ENCODE measurements at regions of chr14 and their contacts with region 1.

Region 1: GRCh38 chr14:94439453-94440057 is 13.0 kb downstream of the SERPINA11 start:
- DNase-seq: no peak
- H3K4me3 ChIP-seq: no peak overlapping the region
- H3K27ac ChIP-seq: no peak overlapping the region
- H3K4me1 ChIP-seq: no peaks in the 10 kb centered on the region
- H3K27me3 ChIP-seq: no peaks in the 10 kb centered on the region; a peak in 1 of 7 replicates
- CTCF ChIP-seq: peak; percentile 22 to 40 (median 23); a peak in 3 of 4 replicates
- EP300 ChIP-seq: no peak
- POLR2A ChIP-seq: no peak
- RAD21 ChIP-seq: no peak; a peak in 1 of 4 replicates

Region 2: DNA sequence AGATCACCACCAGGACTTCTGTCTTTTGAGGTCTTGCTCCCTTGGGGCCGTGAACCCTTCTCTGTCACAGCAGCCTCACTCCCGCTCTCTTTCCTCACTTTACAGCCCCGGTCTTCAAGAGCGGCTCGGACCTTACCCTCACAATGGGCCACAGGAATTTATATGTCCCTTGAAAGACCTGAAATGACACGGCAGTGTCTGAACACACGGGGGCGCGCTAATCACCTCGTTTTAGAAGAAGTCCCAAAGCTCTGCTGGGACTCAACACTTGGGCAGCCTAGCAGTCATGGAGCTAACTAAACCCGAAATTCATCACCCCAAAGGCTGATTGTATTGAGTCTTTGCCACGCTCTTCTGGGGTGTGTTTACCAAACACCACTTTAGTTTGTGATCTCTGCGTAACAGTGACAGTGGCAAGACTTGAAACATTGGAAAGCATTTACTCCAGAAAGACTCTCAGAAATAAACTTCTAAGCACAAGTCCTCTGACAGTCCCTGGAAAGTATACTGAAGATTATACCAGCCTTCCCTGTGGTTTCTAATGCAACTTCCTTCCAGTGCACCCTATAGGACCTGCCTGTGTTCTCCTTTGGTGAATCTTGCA is 16.0 kb before region 1 on chr14:
- CTCF ChIA-PET with region 1: interaction called, 13 read pairs
- POLR2A ChIA-PET with region 1: no interaction called
- DNase-seq: peak; percentile 67 to 88
- H3K4me3 ChIP-seq: no peak overlapping the region
- H3K27ac ChIP-seq: no peak overlapping the region
- H3K4me1 ChIP-seq: 0 out of 7 replicates have a peak, but pooled peaks cover 0 to 2% (median 0%) of the 10 kb centered on the region in 4 experiments
- H3K27me3 ChIP-seq: no peaks in the 10 kb centered on the region
- CTCF ChIP-seq: peak; percentile 62 to 88 (median 83)
- EP300 ChIP-seq: no peak
- POLR2A ChIP-seq: no peak
- RAD21 ChIP-seq: peak; percentile 72 to 80

Region 3: DNA sequence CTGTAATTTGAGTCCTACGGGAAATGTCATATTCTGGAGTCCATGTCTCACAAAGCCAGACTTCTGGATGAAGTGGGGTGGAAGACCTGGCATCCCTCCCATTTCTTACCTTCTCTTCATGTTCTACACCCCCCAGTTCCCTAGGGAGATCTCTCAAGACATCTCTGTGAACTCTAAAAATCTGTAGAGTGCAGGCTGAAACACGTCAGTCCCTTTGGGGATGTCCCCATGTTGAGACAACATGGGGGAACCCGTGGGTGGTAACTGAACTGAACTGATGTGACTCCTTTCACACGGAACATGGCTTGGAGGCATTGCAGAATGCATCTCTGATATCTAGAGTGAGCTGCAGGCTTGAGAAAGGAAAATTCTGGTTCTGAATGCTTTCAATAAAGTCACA is 54.5 kb after region 1 on chr14:
- CTCF ChIA-PET with region 1: interaction called, 12 read pairs
- POLR2A ChIA-PET with region 1: no interaction called
- DNase-seq: no peak
- H3K4me3 ChIP-seq: no peak overlapping the region
- H3K27ac ChIP-seq: no peak overlapping the region
- H3K4me1 ChIP-seq: no peaks in the 10 kb centered on the region
- H3K27me3 ChIP-seq: no peaks in the 10 kb centered on the region; a peak in 1 of 7 replicates
- CTCF ChIP-seq: no peak
- EP300 ChIP-seq: no peak
- POLR2A ChIP-seq: no peak
- RAD21 ChIP-seq: no peak

Region 4: DNA sequence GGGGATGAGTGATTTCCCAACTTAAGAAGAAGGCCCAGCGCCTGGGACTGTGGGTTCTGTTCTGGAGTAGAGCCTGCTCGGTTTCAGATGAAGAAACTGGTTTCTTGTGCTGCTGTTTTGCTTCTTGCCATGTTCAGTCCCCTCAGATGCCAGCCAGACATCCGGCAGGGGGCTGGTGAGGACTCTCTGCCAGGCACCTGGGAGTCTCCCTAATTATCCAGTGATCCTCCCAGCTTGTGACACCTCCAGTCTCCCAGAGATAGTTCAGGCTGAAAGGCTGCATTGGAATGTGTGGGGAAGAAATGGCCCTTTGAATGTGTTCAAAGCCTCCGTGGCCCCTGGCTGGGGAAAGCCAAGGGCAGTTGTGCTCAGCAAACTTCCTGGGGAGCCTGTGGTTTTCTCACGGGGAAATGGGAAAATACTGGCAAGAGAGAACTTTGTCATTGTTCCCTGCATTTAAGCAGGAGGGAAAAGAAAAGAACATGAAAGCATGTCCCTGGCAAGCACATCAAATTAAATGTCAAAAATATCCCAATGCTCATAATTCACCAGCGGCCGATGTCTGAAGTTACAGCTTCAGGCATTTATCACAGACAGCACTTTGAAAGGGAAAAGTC is 78.2 kb after region 1 on chr14:
- CTCF ChIA-PET with region 1: no interaction called
- POLR2A ChIA-PET with region 1: no interaction called
- DNase-seq: no peak
- H3K4me3 ChIP-seq: no peak overlapping the region
- H3K27ac ChIP-seq: no peak overlapping the region
- H3K4me1 ChIP-seq: peaks cover 0 to 12% (median 3%) of the 10 kb centered on the region in 4 experiments; a peak in 4 of 7 replicates
- H3K27me3 ChIP-seq: no peaks in the 10 kb centered on the region
- CTCF ChIP-seq: no peak
- EP300 ChIP-seq: no peak
- POLR2A ChIP-seq: no peak
- RAD21 ChIP-seq: no peak

Region 5: DNA sequence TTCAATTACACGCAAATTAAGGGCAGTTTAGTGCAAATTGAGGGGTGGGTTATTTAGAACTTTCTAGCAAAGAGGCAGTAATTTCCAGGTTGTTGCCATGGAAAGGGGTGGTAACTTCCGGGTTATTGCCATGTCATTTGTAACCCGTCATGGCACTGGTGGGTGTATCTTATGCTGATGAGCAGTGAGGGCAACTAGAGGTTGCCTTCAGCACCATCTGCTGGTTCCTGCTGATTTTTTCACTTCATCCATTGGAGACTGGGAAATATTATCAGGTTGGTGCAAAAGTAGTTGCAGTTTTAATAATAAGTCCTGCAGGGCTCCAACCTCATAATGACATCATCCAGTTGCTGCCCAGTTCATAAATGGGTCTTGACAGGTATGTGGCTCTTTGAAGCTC is 97.3 kb after region 1 on chr14:
- CTCF ChIA-PET with region 1: interaction called, 25 read pairs
- POLR2A ChIA-PET with region 1: no interaction called
- DNase-seq: no peak
- H3K4me3 ChIP-seq: no peak overlapping the region
- H3K27ac ChIP-seq: no peak overlapping the region
- H3K4me1 ChIP-seq: peaks cover 0 to 2% (median 0%) of the 10 kb centered on the region in 4 experiments; a peak in 2 of 7 replicates
- H3K27me3 ChIP-seq: peaks cover 0 to 3% (median 0%) of the 10 kb centered on the region in 4 experiments; a peak in 1 of 7 replicates
- CTCF ChIP-seq: peak in 2 of 3 experiments; percentile 33 to 50; a peak in 3 of 4 replicates
- EP300 ChIP-seq: no peak
- POLR2A ChIP-seq: no peak
- RAD21 ChIP-seq: peak; percentile 47 to 63

Measured in H1 (cell line).